ENCODE measurements at regions of chr5 and their contacts with region 1.

Region 1: GRCh38 chr5:14399054-14399692 is 182.4 kb upstream of the OTULINL start:
- DNase-seq: no peak
- H3K4me3 ChIP-seq: no peak overlapping the region
- H3K27ac ChIP-seq: 0 out of 2 replicates have a peak overlapping the region, but pooled peaks have one; percentile 13
- H3K4me1 ChIP-seq: peaks cover 0 to 4% (median 1%) of the 10 kb centered on the region in 4 experiments; a peak in 2 of 7 replicates
- H3K27me3 ChIP-seq: no peaks in the 10 kb centered on the region
- CTCF ChIP-seq: peak in 2 of 3 experiments; percentile 45 to 48; a peak in 2 of 4 replicates
- EP300 ChIP-seq: no peak
- POLR2A ChIP-seq: no peak
- RAD21 ChIP-seq: peak; percentile 43 to 53

Region 2: DNA sequence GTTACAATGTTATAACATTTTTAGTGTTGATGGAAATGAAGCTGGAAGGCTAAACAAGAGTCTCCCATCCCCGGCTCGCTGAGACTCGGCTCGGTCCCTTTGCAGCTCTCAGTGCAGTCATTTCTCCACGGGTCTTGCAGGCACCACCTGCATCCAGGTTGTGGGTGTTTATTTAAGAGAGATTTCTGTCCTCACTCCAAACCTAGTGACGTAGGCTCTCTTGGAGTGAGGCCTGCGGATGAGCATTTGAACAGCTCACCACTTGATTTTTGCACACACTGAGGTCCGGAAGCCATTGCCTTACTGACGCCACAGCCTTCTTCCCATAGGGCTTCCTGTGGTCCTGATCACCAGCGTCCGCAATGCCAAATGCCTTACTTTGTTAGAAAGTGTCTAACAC is 15.2 kb before region 1 on chr5:
- CTCF ChIA-PET with region 1: interaction called, 35 read pairs
- POLR2A ChIA-PET with region 1: no interaction called
- DNase-seq: no peak
- H3K4me3 ChIP-seq: no peak overlapping the region
- H3K27ac ChIP-seq: no peak overlapping the region
- H3K4me1 ChIP-seq: peaks cover 0 to 13% (median 7%) of the 10 kb centered on the region in 4 experiments; a peak in 4 of 7 replicates
- H3K27me3 ChIP-seq: no peaks in the 10 kb centered on the region
- CTCF ChIP-seq: no peak
- EP300 ChIP-seq: no peak
- POLR2A ChIP-seq: no peak
- RAD21 ChIP-seq: no peak

Region 3: GRCh38 chr5:14415024-14415697 is 16.0 kb after region 1 on chr5:
- CTCF ChIA-PET with region 1: interaction called, 13 read pairs
- POLR2A ChIA-PET with region 1: no interaction called
- DNase-seq: no peak
- H3K4me3 ChIP-seq: no peak overlapping the region
- H3K27ac ChIP-seq: no peak overlapping the region
- H3K4me1 ChIP-seq: peaks cover 4 to 15% (median 11%) of the 10 kb centered on the region in 4 experiments
- H3K27me3 ChIP-seq: no peaks in the 10 kb centered on the region
- CTCF ChIP-seq: no peak
- EP300 ChIP-seq: no peak
- POLR2A ChIP-seq: no peak
- RAD21 ChIP-seq: no peak

Measured in H1 (cell line).